ENCODE measurements at regions of chr17 and their contacts with region 1.

Region 1: DNA sequence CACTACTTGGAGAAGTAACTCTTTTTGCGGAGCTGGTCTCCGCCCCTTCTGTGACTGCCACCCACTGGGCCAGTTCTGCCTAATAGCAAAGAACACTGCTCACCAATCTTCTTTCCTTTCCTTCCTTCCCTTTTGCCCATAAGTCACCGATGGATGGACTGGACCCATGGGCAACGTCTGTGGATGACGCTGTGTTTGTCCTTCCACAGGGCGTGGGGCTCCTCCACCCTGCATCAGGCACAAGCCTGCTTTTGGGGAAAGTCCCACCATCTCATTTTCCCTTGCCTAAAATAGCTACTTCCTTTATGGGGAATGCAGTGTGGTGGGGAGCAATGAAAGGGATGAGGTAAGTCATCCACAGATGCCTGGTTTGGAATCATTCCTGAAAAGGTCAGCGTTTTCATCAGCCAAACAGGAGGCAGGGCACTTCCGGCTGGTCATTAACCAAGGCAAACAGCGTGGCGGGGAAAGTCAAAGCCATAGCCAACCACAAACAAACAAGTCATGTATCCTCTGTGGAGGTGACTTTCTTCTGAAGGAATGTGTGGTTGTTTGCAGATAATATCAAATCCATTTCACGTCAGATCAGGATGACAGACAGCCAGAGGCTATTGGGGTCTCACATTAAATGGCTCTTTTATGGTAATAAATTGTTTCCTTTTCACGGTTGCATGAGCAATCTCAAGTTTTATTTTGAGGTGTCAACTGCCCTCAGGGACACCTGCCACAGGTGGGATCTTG is 30.7 kb upstream of the MED9 start:
- DNase-seq: peak; percentile 84 to 85
- H3K4me3 ChIP-seq: no peak overlapping the region
- H3K4me3 Mint-ChIP-seq: peak overlapping the region; percentile 49
- H3K27ac Mint-ChIP-seq: peak overlapping the region; percentile 84
- H3K4me1 ChIP-seq: peaks cover 43% of the 10 kb centered on the region
- H3K4me1 Mint-ChIP-seq: peaks cover 32% of the 10 kb centered on the region
- H3K27me3 ChIP-seq: no peaks in the 10 kb centered on the region
- H3K27me3 Mint-ChIP-seq: no peaks in the 10 kb centered on the region
- CTCF ChIP-seq: no peak

Region 2: GRCh38 chr17:17387830-17388441 is 58.2 kb before region 1 on chr17:
- CTCF ChIA-PET with region 1: interaction called, 3 read pairs
- POLR2A ChIA-PET with region 1: no interaction called
- intact Hi-C with region 1: loop called (anchors 5 kb)
- DNase-seq: peak; percentile 86 to 88
- H3K4me3 ChIP-seq: no peak overlapping the region
- H3K4me3 Mint-ChIP-seq: no peak overlapping the region
- H3K27ac Mint-ChIP-seq: no peak overlapping the region
- H3K4me1 ChIP-seq: peaks cover 12% of the 10 kb centered on the region
- H3K4me1 Mint-ChIP-seq: peaks cover 21% of the 10 kb centered on the region
- H3K27me3 ChIP-seq: no peaks in the 10 kb centered on the region
- H3K27me3 Mint-ChIP-seq: no peaks in the 10 kb centered on the region
- CTCF ChIP-seq: peak; percentile 78 to 94

Region 3: GRCh38 chr17:17417718-17418181 is 28.3 kb before region 1 on chr17:
- CTCF ChIA-PET with region 1: no interaction called
- POLR2A ChIA-PET with region 1: no interaction called
- intact Hi-C with region 1: loop called (anchors 1 kb)
- DNase-seq: peak; percentile 74 to 88
- H3K4me3 ChIP-seq: no peak overlapping the region
- H3K4me3 Mint-ChIP-seq: no peak overlapping the region
- H3K27ac Mint-ChIP-seq: peak overlapping the region; percentile 43
- H3K4me1 ChIP-seq: peaks cover 34% of the 10 kb centered on the region
- H3K4me1 Mint-ChIP-seq: peaks cover 34% of the 10 kb centered on the region
- H3K27me3 ChIP-seq: no peaks in the 10 kb centered on the region
- H3K27me3 Mint-ChIP-seq: no peaks in the 10 kb centered on the region
- CTCF ChIP-seq: no peak

Region 4: GRCh38 chr17:17476865-17477467 is 30.9 kb after region 1 on chr17 and contains the start of gene MED9:
- CTCF ChIA-PET with region 1: interaction called, 3 read pairs
- POLR2A ChIA-PET with region 1: no interaction called
- intact Hi-C with region 1: loop called (anchors 2 kb)
- DNase-seq: peak; percentile 95 to 97
- H3K4me3 ChIP-seq: peak within 1 kb of the TSS; percentile 93
- H3K4me3 Mint-ChIP-seq: peak within 1 kb of the TSS; percentile 93
- H3K27ac Mint-ChIP-seq: peak within 1 kb of the TSS; percentile 97
- H3K4me1 ChIP-seq: peaks cover 12% of the 10 kb centered on the region; the same call in 1 of the 2 replicates
- H3K4me1 Mint-ChIP-seq: no peaks in the 10 kb centered on the region
- H3K27me3 ChIP-seq: no peaks in the 10 kb centered on the region; the same call in 1 of the 2 replicates
- H3K27me3 Mint-ChIP-seq: peaks cover 7% of the 10 kb centered on the region
- CTCF ChIP-seq: no peak
- total RNA-seq, gene MED9: 24.9 and 26.6 TPM in 2 replicates

Region 5: GRCh38 chr17:17538417-17539391 is 92.6 kb after region 1 on chr17:
- CTCF ChIA-PET with region 1: no interaction called
- POLR2A ChIA-PET with region 1: no interaction called
- intact Hi-C with region 1: loop called (anchors 1 kb)
- DNase-seq: peak; percentile 92
- H3K4me3 ChIP-seq: no peak overlapping the region
- H3K4me3 Mint-ChIP-seq: peak overlapping the region; percentile 27
- H3K27ac Mint-ChIP-seq: peak overlapping the region; percentile 90
- H3K4me1 ChIP-seq: peaks cover 42% of the 10 kb centered on the region
- H3K4me1 Mint-ChIP-seq: peaks cover 19% of the 10 kb centered on the region
- H3K27me3 ChIP-seq: no peaks in the 10 kb centered on the region
- H3K27me3 Mint-ChIP-seq: no peaks in the 10 kb centered on the region
- CTCF ChIP-seq: no peak

Measured in Caco-2 (cell line).